Activated CD4-positive, alpha-beta T cell treated with anti-CD3 and anti-CD28 coated beads, Interleukin-2, amount 10 ng/mL, durations not matched to agents 24 days and 14 days (primary cell): ENCODE measurements at regions of chr16 and their contacts with region 1.

Region 1: DNA sequence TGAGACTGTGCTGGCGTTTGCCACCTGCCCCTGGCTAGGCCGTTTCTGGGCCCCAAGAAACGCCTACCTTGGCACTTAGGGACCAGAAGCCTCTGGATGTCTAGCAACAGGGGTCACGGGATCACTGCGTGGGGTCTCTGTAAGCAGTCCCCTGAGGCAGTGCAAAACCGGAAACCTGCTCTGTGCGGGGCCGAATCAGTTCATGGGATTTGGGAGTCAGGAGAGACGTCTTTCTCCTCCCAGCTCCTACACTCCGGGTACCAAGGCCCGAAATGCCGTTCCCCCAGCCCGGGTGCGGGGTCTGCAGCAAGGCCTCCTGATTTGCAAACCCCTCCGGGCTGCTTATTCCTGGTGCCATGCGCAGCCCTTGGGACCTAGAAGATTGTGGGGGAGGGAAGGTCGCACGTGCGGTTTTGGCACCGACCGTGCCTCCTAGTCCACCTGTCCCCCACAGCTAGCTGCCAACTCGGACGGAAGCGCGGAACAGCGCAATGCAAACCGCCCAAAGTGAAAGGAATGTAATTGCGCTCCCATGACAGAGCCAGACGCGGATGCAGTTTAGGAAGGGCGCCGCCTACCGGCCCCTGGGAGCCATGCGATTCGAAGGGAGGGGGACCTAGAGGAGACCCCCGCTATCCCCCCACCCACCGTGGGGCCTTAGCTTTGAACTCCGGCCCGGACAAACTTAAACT is 6.5 kb downstream of the IRX5 start:
- DNase-seq: peak; percentile 66
- H3K4me3 Mint-ChIP-seq: peak overlapping the region; percentile 26
- H3K27ac Mint-ChIP-seq: peak overlapping the region; percentile 51
- H3K4me1 Mint-ChIP-seq: peaks cover 16% of the 10 kb centered on the region
- H3K27me3 Mint-ChIP-seq: peaks cover 83% of the 10 kb centered on the region

Region 2: DNA sequence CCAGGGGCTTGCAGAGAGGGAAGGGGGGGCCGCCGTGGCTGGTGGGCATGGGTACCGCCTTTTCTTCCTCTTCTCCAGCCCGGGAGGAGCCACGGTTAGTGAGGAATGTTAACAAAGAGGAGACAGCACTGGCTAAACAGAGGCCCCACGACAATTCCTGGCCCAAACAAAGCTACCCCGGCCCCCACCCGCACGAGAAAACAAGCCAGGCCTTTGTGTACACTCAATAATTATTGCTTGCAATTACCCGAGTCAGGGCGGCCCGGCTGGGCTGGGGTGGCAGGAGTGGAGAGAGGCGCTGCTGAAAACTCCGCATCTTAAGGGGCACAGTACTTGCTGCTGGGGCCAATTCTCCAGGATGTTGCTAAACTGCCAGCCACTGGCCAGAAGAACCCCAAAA is 50.0 kb after region 1 on chr16:
- intact Hi-C with region 1: no loop called
- DNase-seq: no peak
- H3K4me3 Mint-ChIP-seq: no peak overlapping the region
- H3K27ac Mint-ChIP-seq: no peak overlapping the region
- H3K4me1 Mint-ChIP-seq: no peaks in the 10 kb centered on the region
- H3K27me3 Mint-ChIP-seq: no peaks in the 10 kb centered on the region

Region 3: GRCh38 chr16:55323637-55324490 is 386.7 kb after region 1 on chr16 and contains the start of gene IRX6:
- intact Hi-C with region 1: loop called (anchors 5 kb)
- DNase-seq: no peak
- H3K4me3 Mint-ChIP-seq: no peak within 1 kb of the TSS
- H3K27ac Mint-ChIP-seq: no peak within 1 kb of the TSS
- H3K4me1 Mint-ChIP-seq: no peaks in the 10 kb centered on the region
- H3K27me3 Mint-ChIP-seq: peaks cover 42% of the 10 kb centered on the region
- total RNA-seq, gene IRX6: not detected in 2 replicates